ENCODE measurements at regions of chr16 and their contacts with region 1.

Region 1: DNA sequence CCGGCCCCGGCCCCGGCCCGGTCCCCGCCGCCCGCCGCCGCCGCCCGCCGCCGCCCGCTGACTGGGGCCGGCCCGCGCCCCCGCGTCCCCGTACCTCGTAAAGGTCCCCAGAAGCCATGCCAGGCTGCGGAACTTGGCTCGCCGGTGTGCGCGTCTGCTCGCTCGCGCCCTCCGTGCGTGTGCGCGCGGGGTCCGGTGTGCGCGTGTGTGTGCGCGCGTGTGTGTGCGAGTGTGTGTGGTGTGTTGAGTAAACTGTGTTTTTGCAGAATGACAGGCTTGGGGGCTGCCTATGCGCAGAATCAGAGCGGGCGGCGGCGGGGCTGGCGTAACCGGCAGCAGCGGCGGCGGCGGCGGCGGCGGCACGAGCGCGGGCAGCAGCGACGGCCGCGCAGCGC is 345 bp downstream of the CDYL2 start:
- DNase-seq: peak; percentile 41 to 84 (median 60)
- ATAC-seq: peak; percentile 48
- H3K4me3 ChIP-seq: peak overlapping the region; percentile 38 to 50
- H3K27ac ChIP-seq: peak overlapping the region in 1 of 2 donors; percentile 57
- H3K4me1 ChIP-seq: peaks cover 0 to 22% of the 10 kb centered on the region in 2 donors
- H3K27me3 ChIP-seq: peaks cover 0 to 7% of the 10 kb centered on the region in 2 donors
- CTCF ChIP-seq: no peak

Region 2: GRCh38 chr16:80518436-80518835 is 285.6 kb before region 1 on chr16:
- intact Hi-C with region 1: no loop called
- DNase-seq: no peak
- ATAC-seq: no peak
- H3K4me3 ChIP-seq: no peak overlapping the region
- H3K27ac ChIP-seq: no peak overlapping the region
- H3K4me1 ChIP-seq: no peaks in the 10 kb centered on the region
- H3K27me3 ChIP-seq: no peaks in the 10 kb centered on the region
- CTCF ChIP-seq: no peak

Region 3: GRCh38 chr16:80540516-80541272 is 263.4 kb before region 1 on chr16 and contains the start of gene DYNLRB2:
- intact Hi-C with region 1: loop called in 1 of 2 experiments (anchors 10 kb)
- DNase-seq: peak; percentile 89 to 96 (median 96)
- ATAC-seq: peak; percentile 98
- H3K4me3 ChIP-seq: peak within 1 kb of the TSS; percentile 57 to 62
- H3K27ac ChIP-seq: peak within 1 kb of the TSS; percentile 47 to 74
- H3K4me1 ChIP-seq: peaks cover 0 to 4% of the 10 kb centered on the region in 2 donors
- H3K27me3 ChIP-seq: peaks cover 0 to 21% of the 10 kb centered on the region in 2 donors
- CTCF ChIP-seq: no peak
- polyA plus RNA-seq, gene DYNLRB2: 2.8 to 9.6 (median 7.5) TPM

Region 4: GRCh38 chr16:80691111-80691741 is 112.8 kb before region 1 on chr16:
- intact Hi-C with region 1: no loop called
- DNase-seq: no peak
- ATAC-seq: no peak
- H3K4me3 ChIP-seq: no peak overlapping the region
- H3K27ac ChIP-seq: no peak overlapping the region
- H3K4me1 ChIP-seq: no peaks in the 10 kb centered on the region
- H3K27me3 ChIP-seq: no peaks in the 10 kb centered on the region
- CTCF ChIP-seq: no peak

Measured in left lung (tissue), 14 donors.